A549 (cell line): ENCODE measurements at regions of chr3 and their contacts with region 1.

Region 1: DNA sequence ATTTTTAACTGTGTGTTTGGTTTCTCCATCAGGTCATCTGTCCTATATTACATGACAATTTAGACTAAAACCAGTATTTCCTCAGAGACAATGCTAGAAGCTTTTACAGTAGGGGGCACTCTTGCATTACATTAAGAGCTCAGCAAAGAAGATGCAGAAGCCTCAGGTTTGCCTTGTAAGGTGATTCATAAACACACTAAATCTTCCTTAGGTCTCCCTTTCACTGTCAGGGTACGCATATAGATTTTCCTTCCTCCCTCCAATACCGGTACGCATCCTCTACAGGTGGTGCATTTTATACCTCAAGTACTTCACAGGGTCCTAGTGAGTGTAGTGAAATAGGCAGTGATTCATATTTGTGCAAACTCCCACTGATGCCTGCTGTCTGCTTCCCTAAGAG is 46.5 kb downstream of the CD86 start:
- DNase-seq: peak; percentile 15 to 59
- ATAC-seq: peak; percentile 66 to 82; a peak in 4 of 6 replicates
- H3K4me3 ChIP-seq: no peak overlapping the region
- H3K27ac ChIP-seq: no peak overlapping the region
- H3K4me1 ChIP-seq: no peaks in the 10 kb centered on the region
- CTCF ChIP-seq: peak; percentile 66
- EP300 ChIP-seq: no peak
- POLR2A ChIP-seq: no peak
- RAD21 ChIP-seq: peak; percentile 71 to 84; a peak in 4 of 5 replicates

Region 2: GRCh38 chr3:122077293-122078234 is 24.1 kb before region 1 on chr3:
- CTCF ChIA-PET with region 1: no interaction called
- POLR2A ChIA-PET with region 1: no interaction called
- DNase-seq: no peak
- ATAC-seq: no peak
- H3K4me3 ChIP-seq: no peak overlapping the region
- H3K27ac ChIP-seq: no peak overlapping the region
- H3K4me1 ChIP-seq: no peaks in the 10 kb centered on the region
- CTCF ChIP-seq: no peak
- EP300 ChIP-seq: no peak
- POLR2A ChIP-seq: no peak
- RAD21 ChIP-seq: no peak

Region 3: DNA sequence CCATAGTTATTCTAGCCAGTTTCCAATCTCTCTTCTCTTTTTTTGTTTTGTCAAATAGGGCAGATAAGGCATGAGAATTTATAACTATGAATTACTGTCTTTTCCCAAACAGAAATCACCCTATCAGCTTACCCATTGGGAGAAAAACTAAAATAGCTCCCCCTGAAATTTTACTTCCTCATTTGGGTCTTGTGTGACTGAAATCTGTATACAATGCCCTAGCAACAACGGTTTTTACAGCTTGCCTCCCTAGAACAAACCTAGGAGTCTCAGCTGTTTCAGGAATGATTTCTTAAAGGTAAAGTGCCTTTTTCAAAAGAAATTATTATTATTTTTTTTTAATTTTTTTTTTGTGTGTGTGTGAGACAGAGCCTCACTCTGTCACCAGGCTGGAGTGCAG is 10.3 kb after region 1 on chr3:
- CTCF ChIA-PET with region 1: interaction called, 12 read pairs
- POLR2A ChIA-PET with region 1: no interaction called
- DNase-seq: no peak
- ATAC-seq: no peak
- H3K4me3 ChIP-seq: no peak overlapping the region
- H3K27ac ChIP-seq: no peak overlapping the region
- H3K4me1 ChIP-seq: no peaks in the 10 kb centered on the region
- CTCF ChIP-seq: no peak
- EP300 ChIP-seq: no peak
- POLR2A ChIP-seq: no peak
- RAD21 ChIP-seq: no peak

Region 4: DNA sequence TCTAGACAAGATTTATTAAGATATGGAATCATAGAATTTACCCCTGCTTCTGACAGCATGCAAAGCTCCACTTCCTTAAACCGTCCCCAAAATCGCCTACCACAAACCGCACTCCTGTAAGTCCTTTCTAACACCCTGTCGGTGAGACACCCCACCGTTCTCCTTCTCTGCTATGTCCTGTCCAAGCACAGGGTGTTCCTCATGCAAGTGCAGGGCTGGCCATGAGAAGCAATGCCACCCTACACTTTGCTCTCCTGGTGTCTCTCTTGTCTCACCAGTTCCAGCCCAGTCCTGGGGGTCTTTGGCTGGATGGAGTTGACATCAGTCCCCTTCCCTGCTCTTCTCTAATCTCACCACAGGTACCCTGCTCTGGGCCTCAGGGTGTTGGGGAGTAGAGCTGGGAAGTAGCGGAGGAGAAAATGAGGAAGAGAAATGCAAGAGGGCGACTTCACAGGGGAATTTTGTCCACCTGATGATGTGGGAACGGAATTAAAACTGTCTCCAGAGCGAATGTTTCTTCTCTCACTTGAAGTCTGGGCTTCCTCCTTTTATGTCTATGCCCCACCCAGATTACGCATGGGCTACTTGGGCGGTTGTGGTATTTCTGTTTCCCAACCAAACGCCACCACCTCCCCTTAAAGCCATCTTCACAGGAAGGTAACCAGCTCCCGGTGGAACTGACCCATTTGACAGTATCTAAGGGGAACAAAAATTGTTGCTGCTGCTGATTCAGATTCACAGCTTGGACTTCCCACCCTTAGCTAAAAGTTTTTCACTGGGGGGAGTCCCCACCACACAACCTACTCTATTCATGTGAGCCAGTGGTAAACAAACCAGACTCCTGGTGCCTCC is 131.7 kb after region 1 on chr3:
- CTCF ChIA-PET with region 1: no interaction called
- POLR2A ChIA-PET with region 1: no interaction called
- DNase-seq: no peak
- ATAC-seq: no peak
- H3K4me3 ChIP-seq: no peak overlapping the region
- H3K27ac ChIP-seq: no peak overlapping the region
- H3K4me1 ChIP-seq: no peaks in the 10 kb centered on the region
- CTCF ChIP-seq: no peak
- EP300 ChIP-seq: no peak
- POLR2A ChIP-seq: no peak
- RAD21 ChIP-seq: no peak

Region 5: GRCh38 chr3:122258757-122259371 is 157.2 kb after region 1 on chr3:
- CTCF ChIA-PET with region 1: interaction called, 10 read pairs
- POLR2A ChIA-PET with region 1: no interaction called
- DNase-seq: peak; percentile 60 to 61
- ATAC-seq: peak; percentile 94 to 95
- H3K4me3 ChIP-seq: no peak overlapping the region
- H3K27ac ChIP-seq: no peak overlapping the region
- H3K4me1 ChIP-seq: no peaks in the 10 kb centered on the region
- CTCF ChIP-seq: peak; percentile 42; the same call in 2 of the 3 replicates
- EP300 ChIP-seq: no peak
- POLR2A ChIP-seq: no peak
- RAD21 ChIP-seq: peak; percentile 77 to 82

Region 6: DNA sequence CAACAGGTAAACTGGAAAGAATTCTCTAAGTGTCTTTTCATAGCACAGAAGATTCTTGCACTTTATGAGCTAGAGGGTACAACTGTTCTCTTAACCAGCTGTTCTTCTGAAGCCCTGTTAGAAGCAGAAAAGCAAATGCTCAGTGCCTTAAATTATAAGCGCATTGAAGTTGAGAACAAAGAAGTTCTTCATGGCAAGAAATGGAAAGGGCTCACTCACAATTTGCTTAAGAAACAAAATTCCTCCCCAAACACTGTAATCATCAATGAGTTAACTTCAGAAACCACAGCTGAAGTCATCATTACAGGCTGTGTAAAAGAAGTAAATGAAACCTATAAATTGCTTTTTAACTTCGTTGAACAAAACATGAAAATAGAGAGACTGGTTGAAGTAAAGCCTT is 598.5 kb after region 1 on chr3:
- CTCF ChIA-PET with region 1: no interaction called
- POLR2A ChIA-PET with region 1: no interaction called
- DNase-seq: no peak
- ATAC-seq: no peak
- H3K4me3 ChIP-seq: no peak overlapping the region
- H3K27ac ChIP-seq: no peak overlapping the region
- H3K4me1 ChIP-seq: no peaks in the 10 kb centered on the region
- CTCF ChIP-seq: no peak
- EP300 ChIP-seq: no peak
- POLR2A ChIP-seq: no peak
- RAD21 ChIP-seq: no peak

Region 7: DNA sequence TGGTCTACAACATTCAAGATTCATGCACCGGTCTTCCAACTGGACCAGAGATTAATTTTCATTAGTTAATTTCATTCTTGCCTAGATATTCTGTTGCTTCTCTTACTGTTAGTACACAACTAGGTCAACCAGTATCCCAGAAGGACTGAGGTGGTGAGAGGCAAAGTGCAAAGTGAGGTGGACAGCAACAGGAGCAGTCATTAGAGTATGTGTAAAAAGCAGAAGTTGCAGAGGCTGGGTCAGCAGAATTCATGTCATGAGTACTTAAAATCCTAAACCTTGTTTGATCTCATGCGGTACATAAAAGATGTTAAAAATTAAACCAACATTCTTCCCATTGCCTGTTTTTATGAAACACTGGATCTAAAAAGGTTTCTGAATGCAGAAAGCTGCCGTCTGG is 625.6 kb after region 1 on chr3:
- CTCF ChIA-PET with region 1: no interaction called
- POLR2A ChIA-PET with region 1: no interaction called
- DNase-seq: no peak
- ATAC-seq: no peak
- H3K4me3 ChIP-seq: no peak overlapping the region
- H3K27ac ChIP-seq: no peak overlapping the region
- H3K4me1 ChIP-seq: peaks cover 9% of the 10 kb centered on the region
- CTCF ChIP-seq: no peak
- EP300 ChIP-seq: no peak
- POLR2A ChIP-seq: no peak
- RAD21 ChIP-seq: no peak